Heart left ventricle (tissue), 16 donors: ENCODE measurements at regions of chr13 and their contacts with region 1.

Region 1: DNA sequence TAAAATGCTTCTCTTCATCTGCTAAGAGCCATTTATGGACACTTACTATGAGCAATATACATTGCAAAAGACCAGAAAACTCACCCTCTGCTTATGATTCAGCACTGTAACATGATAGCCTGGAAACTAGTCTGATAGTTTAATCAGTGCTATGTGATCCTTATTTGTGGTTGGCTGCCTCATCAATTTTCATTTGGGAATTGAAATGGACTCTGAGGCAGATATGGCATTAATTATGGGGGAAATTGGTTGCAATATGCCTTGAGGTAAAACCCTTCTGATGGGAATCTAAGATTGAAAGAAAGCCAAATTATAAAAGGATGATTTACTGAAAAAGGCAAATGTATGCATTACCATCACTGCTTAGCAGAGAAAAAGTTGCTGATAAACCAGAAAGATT is 33.5 kb downstream of the FAM216B start:
- DNase-seq: no peak
- ATAC-seq: no peak
- H3K4me3 ChIP-seq: no peak overlapping the region
- H3K27ac ChIP-seq: no peak overlapping the region
- H3K4me1 ChIP-seq: no peaks in the 10 kb centered on the region
- H3K27me3 ChIP-seq: no peaks in the 10 kb centered on the region
- CTCF ChIP-seq: no peak
- POLR2A ChIP-seq: no peak

Region 2: GRCh38 chr13:42594970-42595571 is 219.8 kb before region 1 on chr13:
- intact Hi-C with region 1: loop called in 2 of 10 experiments (anchors 10 kb)
- DNase-seq: peak in 3 of 5 donors; percentile 23 to 37 (median 30)
- ATAC-seq: peak in 2 of 4 donors; percentile 50 to 63
- H3K4me3 ChIP-seq: no peak overlapping the region
- H3K27ac ChIP-seq: no peak overlapping the region
- H3K4me1 ChIP-seq: no peaks in the 10 kb centered on the region
- H3K27me3 ChIP-seq: peaks cover 0 to 27% (median 2%) of the 10 kb centered on the region in 9 donors
- CTCF ChIP-seq: peak; percentile 78 to 89 (median 85)
- POLR2A ChIP-seq: no peak

Region 3: GRCh38 chr13:42660333-42660965 is 154.4 kb before region 1 on chr13:
- intact Hi-C with region 1: loop called in 3 of 10 experiments (anchors 2 to 5 kb)
- DNase-seq: no peak
- ATAC-seq: no peak
- H3K4me3 ChIP-seq: no peak overlapping the region
- H3K27ac ChIP-seq: no peak overlapping the region
- H3K4me1 ChIP-seq: no peaks in the 10 kb centered on the region
- H3K27me3 ChIP-seq: peaks cover 0 to 19% (median 0%) of the 10 kb centered on the region in 9 donors
- CTCF ChIP-seq: peak in 9 of 12 donors; percentile 24 to 47 (median 32)
- POLR2A ChIP-seq: no peak

Region 4: GRCh38 chr13:42671502-42671901 is 143.4 kb before region 1 on chr13:
- intact Hi-C with region 1: loop called in 1 of 10 experiments (anchors 10 kb)
- DNase-seq: no peak
- ATAC-seq: peak in 2 of 4 donors; percentile 54 to 56
- H3K4me3 ChIP-seq: no peak overlapping the region
- H3K27ac ChIP-seq: no peak overlapping the region
- H3K4me1 ChIP-seq: peaks cover 0 to 9% (median 0%) of the 10 kb centered on the region in 12 donors
- H3K27me3 ChIP-seq: no peaks in the 10 kb centered on the region
- CTCF ChIP-seq: no peak
- POLR2A ChIP-seq: no peak